ENCODE measurements at regions of chr3 and their contacts with region 1.

Region 1: GRCh38 chr3:158790901-158791589 is 10.8 kb upstream of the MFSD1 start:
- DNase-seq: peak in 7 of 9 donors; percentile 38 to 66 (median 56)
- ATAC-seq: peak; percentile 82
- H3K4me3 ChIP-seq: no peak overlapping the region
- H3K4me3 Mint-ChIP-seq: peak overlapping the region; percentile 35 to 88 (median 66)
- H3K27ac ChIP-seq: no peak overlapping the region
- H3K27ac Mint-ChIP-seq: peak overlapping the region in 1 of 9 donors; percentile 16
- H3K4me1 ChIP-seq: no peaks in the 10 kb centered on the region
- H3K4me1 Mint-ChIP-seq: peaks cover 3 to 8% (median 4%) of the 10 kb centered on the region in 7 donors
- H3K27me3 ChIP-seq: no peaks in the 10 kb centered on the region
- H3K27me3 Mint-ChIP-seq: peaks cover 0 to 10% (median 0%) of the 10 kb centered on the region in 5 donors

Region 2: DNA sequence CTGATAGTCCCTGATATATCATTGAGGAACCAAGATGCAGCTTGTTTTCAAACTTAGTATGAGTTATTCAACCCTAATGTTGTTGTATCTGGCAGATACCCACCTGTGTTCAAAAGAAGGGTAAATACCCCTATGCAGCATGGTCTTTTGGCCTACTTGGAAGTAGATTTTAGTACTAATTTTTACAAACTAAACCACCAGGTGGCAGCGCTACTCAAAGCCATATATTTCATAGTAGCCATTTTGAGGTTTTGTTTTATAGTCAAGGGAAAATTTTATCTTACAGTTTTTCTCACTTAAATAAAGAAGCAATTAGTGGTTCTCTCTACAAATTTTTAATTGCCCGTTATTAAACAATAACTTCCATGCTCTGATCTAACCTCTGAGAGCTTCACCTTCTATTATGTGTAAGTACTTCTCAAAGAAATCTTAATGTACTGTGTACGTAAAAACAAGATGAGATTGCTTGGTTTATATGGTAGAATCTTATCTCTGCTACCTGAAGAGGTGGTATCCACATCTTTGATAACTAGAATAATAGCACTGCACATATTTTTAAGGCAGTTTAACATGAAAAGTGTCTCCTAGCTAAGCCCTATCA is 251.5 kb before region 1 on chr3:
- CTCF ChIA-PET with region 1: interaction called, 5 read pairs
- POLR2A ChIA-PET with region 1: no interaction called
- intact Hi-C with region 1: loop called (anchors 1 kb)
- DNase-seq: peak in 7 of 9 donors; percentile 4 to 34 (median 18)
- ATAC-seq: peak; percentile 67
- H3K4me3 ChIP-seq: no peak overlapping the region
- H3K4me3 Mint-ChIP-seq: no peak overlapping the region
- H3K27ac ChIP-seq: no peak overlapping the region
- H3K27ac Mint-ChIP-seq: no peak overlapping the region
- H3K4me1 ChIP-seq: no peaks in the 10 kb centered on the region
- H3K4me1 Mint-ChIP-seq: no peaks in the 10 kb centered on the region
- H3K27me3 ChIP-seq: no peaks in the 10 kb centered on the region
- H3K27me3 Mint-ChIP-seq: no peaks in the 10 kb centered on the region

Region 3: DNA sequence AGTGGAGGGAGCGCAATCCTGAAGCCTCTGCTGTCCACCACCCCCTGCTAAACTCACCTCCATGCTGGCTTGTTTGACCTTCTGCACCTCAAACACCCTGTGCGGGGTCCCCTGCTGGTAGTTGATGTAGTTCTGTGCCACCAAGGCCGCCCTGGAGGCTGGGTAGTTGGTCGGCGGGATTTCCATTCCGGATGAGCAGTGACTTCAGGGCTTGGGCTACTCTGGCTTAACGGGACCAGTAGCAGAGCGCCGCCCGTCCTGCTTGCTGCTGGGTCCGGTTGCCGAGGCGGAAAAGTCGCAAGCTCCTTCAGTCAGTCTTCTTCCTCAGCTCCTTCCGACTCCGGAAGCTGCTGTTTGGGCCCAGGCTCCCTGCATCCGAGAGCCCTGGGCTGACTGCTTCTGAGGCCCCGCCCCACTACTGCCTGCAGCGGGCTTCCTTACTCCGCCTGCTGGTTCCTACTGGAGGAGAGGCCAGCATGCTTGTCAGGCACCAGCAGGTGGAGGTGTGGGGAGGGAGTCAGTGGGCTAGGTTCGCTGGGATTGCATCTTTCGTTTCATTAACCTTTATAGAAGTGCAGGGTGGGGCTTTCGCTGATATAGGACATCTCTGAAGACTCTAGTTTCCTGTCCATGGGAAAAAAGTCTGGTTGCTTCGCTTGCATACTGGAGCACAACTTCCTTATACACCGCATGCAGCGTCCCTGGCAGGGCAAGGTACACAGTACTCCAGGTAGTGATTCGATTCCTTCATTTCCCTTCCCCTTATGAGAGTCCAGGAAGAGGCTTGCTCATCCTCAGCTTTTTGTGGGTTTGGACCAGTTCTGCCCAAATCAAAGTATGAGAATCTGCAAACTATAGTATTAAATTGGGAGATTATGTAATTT is 118.5 kb before region 1 on chr3 and contains the start of gene LXN:
- CTCF ChIA-PET with region 1: interaction called, 3 read pairs
- POLR2A ChIA-PET with region 1: no interaction called
- intact Hi-C with region 1: loop called in 1 of 2 experiments (anchors 1 kb)
- DNase-seq: peak; percentile 42 to 86 (median 74)
- ATAC-seq: peak; percentile 99
- H3K4me3 ChIP-seq: peak within 1 kb of the TSS; percentile 79
- H3K4me3 Mint-ChIP-seq: peak within 1 kb of the TSS; percentile 82 to 97 (median 92)
- H3K27ac ChIP-seq: peak within 1 kb of the TSS; percentile 71
- H3K27ac Mint-ChIP-seq: peak within 1 kb of the TSS; percentile 67 to 97 (median 91)
- H3K4me1 ChIP-seq: peaks cover 15 to 19% of the 10 kb centered on the region in 2 donors
- H3K4me1 Mint-ChIP-seq: peaks cover 13 to 40% (median 33%) of the 10 kb centered on the region in 7 donors
- H3K27me3 ChIP-seq: no peaks in the 10 kb centered on the region
- H3K27me3 Mint-ChIP-seq: no peaks in the 10 kb centered on the region
- total RNA-seq, gene LXN: 2.1 to 10.9 (median 6.0) TPM

Region 4: GRCh38 chr3:158773845-158774830 is 16.9 kb before region 1 on chr3:
- CTCF ChIA-PET with region 1: no interaction called
- POLR2A ChIA-PET with region 1: no interaction called
- intact Hi-C with region 1: no loop called
- DNase-seq: no peak
- ATAC-seq: no peak
- H3K4me3 ChIP-seq: no peak overlapping the region
- H3K4me3 Mint-ChIP-seq: no peak overlapping the region
- H3K27ac ChIP-seq: no peak overlapping the region
- H3K27ac Mint-ChIP-seq: no peak overlapping the region
- H3K4me1 ChIP-seq: no peaks in the 10 kb centered on the region
- H3K4me1 Mint-ChIP-seq: peaks cover 0 to 5% (median 0%) of the 10 kb centered on the region in 7 donors
- H3K27me3 ChIP-seq: no peaks in the 10 kb centered on the region
- H3K27me3 Mint-ChIP-seq: no peaks in the 10 kb centered on the region

Region 5: GRCh38 chr3:158801696-158802408 is 10.8 kb after region 1 on chr3 and contains the start of gene MFSD1:
- CTCF ChIA-PET with region 1: interaction called, 19 read pairs
- POLR2A ChIA-PET with region 1: interaction called, 6 read pairs
- intact Hi-C with region 1: loop called (anchors 1 kb)
- DNase-seq: peak; percentile 73 to 91 (median 83)
- ATAC-seq: peak; percentile 94
- H3K4me3 ChIP-seq: peak within 1 kb of the TSS; percentile 88
- H3K4me3 Mint-ChIP-seq: peak within 1 kb of the TSS; percentile 84 to 93 (median 90)
- H3K27ac ChIP-seq: peak within 1 kb of the TSS; percentile 76
- H3K27ac Mint-ChIP-seq: peak within 1 kb of the TSS; percentile 58 to 98 (median 92)
- H3K4me1 ChIP-seq: peaks cover 9 to 11% of the 10 kb centered on the region in 2 donors
- H3K4me1 Mint-ChIP-seq: peaks cover 24 to 50% (median 43%) of the 10 kb centered on the region in 7 donors
- H3K27me3 ChIP-seq: no peaks in the 10 kb centered on the region
- H3K27me3 Mint-ChIP-seq: peaks cover 0 to 24% (median 0%) of the 10 kb centered on the region in 5 donors
- total RNA-seq, gene MFSD1: 24.6 to 66.0 (median 31.1) TPM

Region 6: DNA sequence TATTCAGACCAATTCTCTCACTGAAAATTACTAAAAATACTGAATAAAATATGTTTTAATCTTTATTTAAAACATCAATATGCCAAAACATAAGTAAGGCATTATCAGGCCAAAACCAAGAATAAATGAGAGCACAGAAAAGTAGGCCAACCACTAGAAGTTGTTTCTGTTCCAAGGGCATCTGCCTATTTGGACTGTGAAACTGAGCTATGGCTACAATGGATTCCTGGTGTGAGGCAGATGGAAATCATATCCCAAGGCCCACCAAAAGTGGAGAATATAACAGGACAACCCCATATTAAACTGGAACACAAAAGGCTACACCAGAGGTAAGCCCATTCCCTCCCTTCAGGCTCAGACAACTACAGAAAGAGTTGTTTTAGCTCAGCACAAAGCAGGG is 894.8 kb after region 1 on chr3:
- CTCF ChIA-PET with region 1: no interaction called
- POLR2A ChIA-PET with region 1: no interaction called
- intact Hi-C with region 1: no loop called
- DNase-seq: no peak
- ATAC-seq: no peak
- H3K4me3 ChIP-seq: no peak overlapping the region
- H3K4me3 Mint-ChIP-seq: no peak overlapping the region
- H3K27ac ChIP-seq: no peak overlapping the region
- H3K27ac Mint-ChIP-seq: no peak overlapping the region
- H3K4me1 ChIP-seq: no peaks in the 10 kb centered on the region
- H3K4me1 Mint-ChIP-seq: no peaks in the 10 kb centered on the region
- H3K27me3 ChIP-seq: no peaks in the 10 kb centered on the region
- H3K27me3 Mint-ChIP-seq: peaks cover 0 to 18% (median 0%) of the 10 kb centered on the region in 5 donors

Measured in naive thymus-derived CD4-positive, alpha-beta T cell (primary cell).